Natural killer cell (primary cell): ENCODE measurements at regions of chr12 and their contacts with region 1.

Region 1: GRCh38 chr12:11171145-11171968 is at the start of gene SMIM10L1:
- DNase-seq: peak; percentile 86 to 95
- ATAC-seq: peak; percentile 93 to 96 (median 94)
- H3K4me3 ChIP-seq: peak within 1 kb of the TSS; percentile 69
- H3K4me3 Mint-ChIP-seq: peak within 1 kb of the TSS; percentile 100
- H3K27ac ChIP-seq: peak within 1 kb of the TSS; percentile 89
- H3K27ac Mint-ChIP-seq: peak within 1 kb of the TSS; percentile 99 to 100
- H3K4me1 ChIP-seq: peaks cover 8% of the 10 kb centered on the region
- H3K4me1 Mint-ChIP-seq: peaks cover 68 to 72% of the 10 kb centered on the region in 2 donors
- H3K27me3 ChIP-seq: no peaks in the 10 kb centered on the region
- H3K27me3 Mint-ChIP-seq: no peaks in the 10 kb centered on the region
- CTCF ChIP-seq: no peak
- total RNA-seq, gene SMIM10L1: 8.6 to 10.7 (median 9.9) TPM

Region 2: DNA sequence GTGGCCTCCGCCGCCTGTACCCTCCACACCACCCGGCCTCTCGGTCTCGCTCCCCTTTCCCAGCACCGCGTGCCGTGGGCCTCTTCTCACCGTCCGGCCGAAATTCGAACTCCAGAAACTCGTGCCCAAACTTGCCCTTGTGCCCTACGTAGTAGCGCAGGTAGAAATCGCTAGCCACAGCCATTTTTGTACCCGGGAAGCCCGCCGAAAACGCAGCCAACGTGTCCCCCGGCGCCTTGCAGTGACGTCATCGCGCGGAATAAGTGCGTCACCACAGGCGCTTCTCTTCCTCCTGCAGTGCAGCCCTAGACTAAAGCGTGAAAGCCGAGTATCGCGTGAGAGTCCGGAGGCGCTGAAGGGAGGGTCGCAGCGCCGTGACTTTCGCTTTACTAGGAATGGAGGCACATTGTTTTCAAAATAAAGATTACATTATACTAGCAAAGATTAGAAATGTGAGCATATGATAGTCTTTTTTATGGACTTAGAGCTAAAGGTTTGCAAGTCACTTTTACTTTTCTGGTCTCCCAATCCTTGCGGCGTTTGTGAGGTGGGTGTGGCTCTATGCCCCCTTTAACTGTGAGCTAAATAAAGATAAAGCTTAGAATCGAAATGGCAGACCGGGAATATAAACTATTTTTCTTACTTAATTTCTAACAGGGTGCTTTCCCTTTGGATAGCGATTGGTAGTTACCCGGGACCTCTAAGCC is 557.9 kb before region 1 on chr12 and contains the start of gene MAGOHB:
- intact Hi-C with region 1: loop called (anchors 10 kb)
- DNase-seq: peak; percentile 99
- ATAC-seq: peak; percentile 94 to 97 (median 96)
- H3K4me3 ChIP-seq: peak within 1 kb of the TSS; percentile 96
- H3K4me3 Mint-ChIP-seq: peak within 1 kb of the TSS; percentile 100
- H3K27ac ChIP-seq: peak within 1 kb of the TSS; percentile 94
- H3K27ac Mint-ChIP-seq: peak within 1 kb of the TSS; percentile 100
- H3K4me1 ChIP-seq: peaks cover 8% of the 10 kb centered on the region
- H3K4me1 Mint-ChIP-seq: peaks cover 22 to 24% of the 10 kb centered on the region in 2 donors
- H3K27me3 ChIP-seq: no peaks in the 10 kb centered on the region
- H3K27me3 Mint-ChIP-seq: peaks cover 5 to 6% of the 10 kb centered on the region in 2 donors
- CTCF ChIP-seq: no peak
- total RNA-seq, gene MAGOHB: 13.0 to 16.3 (median 13.1) TPM

Region 3: GRCh38 chr12:10982244-10982643 is 189.1 kb before region 1 on chr12:
- intact Hi-C with region 1: loop called (anchors 2 kb)
- DNase-seq: peak in 1 of 2 donors; percentile 82
- ATAC-seq: peak; percentile 72 to 97 (median 81)
- H3K4me3 ChIP-seq: no peak overlapping the region
- H3K4me3 Mint-ChIP-seq: peak overlapping the region; percentile 55
- H3K27ac ChIP-seq: no peak overlapping the region
- H3K27ac Mint-ChIP-seq: no peak overlapping the region
- H3K4me1 ChIP-seq: peaks cover 15% of the 10 kb centered on the region
- H3K4me1 Mint-ChIP-seq: peaks cover 31 to 35% of the 10 kb centered on the region in 2 donors
- H3K27me3 ChIP-seq: peaks cover 15% of the 10 kb centered on the region
- H3K27me3 Mint-ChIP-seq: peaks cover 47 to 60% of the 10 kb centered on the region in 2 donors
- CTCF ChIP-seq: no peak